ENCODE measurements at regions of chr7 and their contacts with region 1.

Region 1: GRCh38 chr7:5396999-5397663 is 26.5 kb downstream of the TNRC18 start:
- DNase-seq: peak; percentile 99
- H3K4me3 Mint-ChIP-seq: peak overlapping the region; percentile 88
- H3K27ac Mint-ChIP-seq: peak overlapping the region; percentile 96
- H3K4me1 Mint-ChIP-seq: peaks cover 39% of the 10 kb centered on the region
- H3K27me3 Mint-ChIP-seq: no peaks in the 10 kb centered on the region
- CTCF ChIP-seq: no peak

Region 2: GRCh38 chr7:5237286-5237685 is 159.8 kb before region 1 on chr7:
- CTCF ChIA-PET with region 1: interaction called, 23 read pairs
- intact Hi-C with region 1: no loop called
- DNase-seq: no peak
- H3K4me3 Mint-ChIP-seq: no peak overlapping the region
- H3K27ac Mint-ChIP-seq: no peak overlapping the region
- H3K4me1 Mint-ChIP-seq: peaks cover 25% of the 10 kb centered on the region
- H3K27me3 Mint-ChIP-seq: peaks cover 11% of the 10 kb centered on the region
- CTCF ChIP-seq: no peak

Region 3: GRCh38 chr7:5423844-5424688 is 26.9 kb after region 1 on chr7:
- CTCF ChIA-PET with region 1: interaction called, 46 read pairs
- intact Hi-C with region 1: no loop called
- DNase-seq: peak; percentile 99
- H3K4me3 Mint-ChIP-seq: peak overlapping the region; percentile 99
- H3K27ac Mint-ChIP-seq: peak overlapping the region; percentile 94
- H3K4me1 Mint-ChIP-seq: peaks cover 3% of the 10 kb centered on the region
- H3K27me3 Mint-ChIP-seq: no peaks in the 10 kb centered on the region
- CTCF ChIP-seq: no peak

Region 4: GRCh38 chr7:5450549-5451372 is 53.6 kb after region 1 on chr7:
- CTCF ChIA-PET with region 1: interaction called, 34 read pairs
- intact Hi-C with region 1: no loop called
- DNase-seq: peak; percentile 61
- H3K4me3 Mint-ChIP-seq: no peak overlapping the region
- H3K27ac Mint-ChIP-seq: peak overlapping the region; percentile 61
- H3K4me1 Mint-ChIP-seq: peaks cover 9% of the 10 kb centered on the region
- H3K27me3 Mint-ChIP-seq: peaks cover 8% of the 10 kb centered on the region
- CTCF ChIP-seq: peak; percentile 91

Measured in Calu3 (cell line).